ENCODE measurements at regions of chr4 and their contacts with region 1.

Region 1: DNA sequence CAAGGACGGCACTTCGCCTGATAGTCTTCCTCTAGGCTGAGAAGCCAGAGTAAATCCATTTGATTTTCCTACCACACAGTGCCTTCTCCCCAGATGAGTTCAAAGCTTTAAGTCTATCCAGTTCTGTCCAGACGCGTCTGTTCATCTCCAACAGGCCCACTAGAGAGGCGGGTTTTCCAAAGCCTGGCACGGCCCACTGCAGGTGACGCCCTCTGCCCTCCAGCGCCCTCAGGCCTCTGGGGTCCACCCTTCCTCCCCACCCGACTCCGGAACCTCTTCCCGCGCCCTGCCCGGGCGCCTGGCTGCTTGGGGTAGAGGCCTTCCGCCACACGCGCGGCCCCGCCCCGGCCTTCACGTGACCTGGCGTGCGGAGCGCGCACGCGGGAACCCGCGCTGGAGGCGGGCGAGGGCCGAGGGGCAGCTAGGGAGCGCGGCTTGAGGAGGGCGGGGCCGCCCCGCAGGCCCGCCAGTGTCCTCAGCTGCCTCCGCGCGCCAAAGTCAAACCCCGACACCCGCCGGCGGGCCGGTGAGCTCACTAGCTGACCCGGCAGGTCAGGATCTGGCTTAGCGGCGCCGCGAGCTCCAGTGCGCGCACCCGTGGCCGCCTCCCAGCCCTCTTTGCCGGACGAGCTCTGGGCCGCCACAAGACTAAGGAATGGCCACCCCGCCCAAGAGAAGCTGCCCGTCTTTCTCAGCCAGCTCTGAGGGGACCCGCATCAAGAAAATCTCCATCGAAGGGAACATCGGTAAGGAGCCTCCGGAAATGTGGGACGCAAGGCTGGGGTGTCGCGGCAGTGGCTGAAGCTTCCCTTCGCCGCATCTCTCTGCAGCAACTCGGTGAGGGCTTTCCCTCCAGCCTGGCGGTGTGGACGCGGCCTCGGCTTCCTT is at the start of gene DCK:
- DNase-seq: peak; percentile 94
- ATAC-seq: peak; percentile 82
- H3K4me3 Mint-ChIP-seq: peak within 1 kb of the TSS; percentile 99
- H3K27ac Mint-ChIP-seq: peak within 1 kb of the TSS; percentile 92
- H3K4me1 Mint-ChIP-seq: peaks cover 31% of the 10 kb centered on the region
- H3K27me3 Mint-ChIP-seq: no peaks in the 10 kb centered on the region
- total RNA-seq, gene DCK: 67.4 to 71.6 TPM

Region 2: DNA sequence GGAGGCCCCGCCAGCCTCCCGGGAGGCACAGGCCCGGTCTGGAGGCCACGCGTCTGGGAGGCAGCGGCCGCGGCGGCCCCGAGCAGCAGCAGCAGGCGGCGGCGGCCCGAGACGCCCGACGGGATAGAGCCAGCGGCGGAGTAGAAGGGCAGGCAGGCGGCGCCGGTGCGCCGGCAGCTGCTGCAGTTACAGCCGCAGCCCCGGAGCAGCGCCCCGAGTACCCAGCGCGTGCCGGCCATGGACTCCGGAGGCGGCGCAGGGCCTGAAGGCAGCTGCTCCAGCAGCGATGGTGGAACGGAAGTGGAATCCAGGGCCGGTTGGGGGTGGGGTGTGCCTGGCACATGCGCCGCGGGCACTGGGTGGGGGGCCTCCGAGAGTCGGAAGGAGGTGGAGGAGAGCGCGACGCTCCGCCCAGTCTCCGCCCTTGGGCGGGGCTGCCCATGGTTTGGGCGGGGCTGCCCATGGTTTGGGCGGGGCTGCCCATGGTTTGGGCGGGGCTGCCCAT is 153.8 kb before region 1 on chr4 and contains the start of gene GRSF1:
- POLR2A ChIA-PET with region 1: interaction called, 20 read pairs
- DNase-seq: peak; percentile 95
- ATAC-seq: peak; percentile 90
- H3K4me3 Mint-ChIP-seq: peak within 1 kb of the TSS; percentile 97
- H3K27ac Mint-ChIP-seq: peak within 1 kb of the TSS; percentile 94
- H3K4me1 Mint-ChIP-seq: peaks cover 22% of the 10 kb centered on the region
- H3K27me3 Mint-ChIP-seq: no peaks in the 10 kb centered on the region
- total RNA-seq, gene GRSF1: 58.6 to 61.0 TPM

Region 3: DNA sequence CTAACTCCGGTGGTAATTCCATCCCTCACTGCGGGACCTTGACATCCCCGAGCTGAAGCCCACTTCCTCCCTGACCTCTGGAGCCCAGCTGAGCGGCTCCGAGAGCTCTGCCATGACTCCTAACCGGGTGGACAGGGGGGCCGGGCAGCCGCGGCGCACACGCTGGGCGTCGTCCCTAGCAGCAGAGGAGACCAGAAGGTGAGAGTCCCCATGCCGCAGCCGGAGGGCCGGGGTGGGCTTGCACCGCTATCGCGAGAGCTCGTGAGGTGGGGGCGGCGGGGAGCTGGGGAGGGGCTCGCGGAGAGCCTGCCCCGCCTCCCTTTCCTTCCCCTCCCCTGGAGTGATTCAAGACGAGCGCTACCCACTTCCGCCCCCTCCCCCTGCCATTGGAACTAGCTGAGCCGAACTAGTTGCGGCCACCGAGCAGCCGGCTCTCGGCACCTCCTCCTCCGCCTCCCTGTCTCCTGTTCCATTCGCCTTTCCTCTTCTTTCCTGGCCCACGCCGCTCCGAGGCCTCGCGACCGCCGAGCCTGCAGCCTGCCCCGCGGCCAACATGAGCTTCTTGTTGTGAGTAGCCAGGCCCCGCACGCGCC is 91.3 kb before region 1 on chr4 and contains the start of gene MOB1B:
- POLR2A ChIA-PET with region 1: interaction called, 13 read pairs
- DNase-seq: peak; percentile 83
- ATAC-seq: peak; percentile 96
- H3K4me3 Mint-ChIP-seq: peak within 1 kb of the TSS; percentile 100
- H3K27ac Mint-ChIP-seq: peak within 1 kb of the TSS; percentile 95
- H3K4me1 Mint-ChIP-seq: peaks cover 19% of the 10 kb centered on the region
- H3K27me3 Mint-ChIP-seq: no peaks in the 10 kb centered on the region
- total RNA-seq, gene MOB1B: 13.3 to 14.0 TPM

Region 4: DNA sequence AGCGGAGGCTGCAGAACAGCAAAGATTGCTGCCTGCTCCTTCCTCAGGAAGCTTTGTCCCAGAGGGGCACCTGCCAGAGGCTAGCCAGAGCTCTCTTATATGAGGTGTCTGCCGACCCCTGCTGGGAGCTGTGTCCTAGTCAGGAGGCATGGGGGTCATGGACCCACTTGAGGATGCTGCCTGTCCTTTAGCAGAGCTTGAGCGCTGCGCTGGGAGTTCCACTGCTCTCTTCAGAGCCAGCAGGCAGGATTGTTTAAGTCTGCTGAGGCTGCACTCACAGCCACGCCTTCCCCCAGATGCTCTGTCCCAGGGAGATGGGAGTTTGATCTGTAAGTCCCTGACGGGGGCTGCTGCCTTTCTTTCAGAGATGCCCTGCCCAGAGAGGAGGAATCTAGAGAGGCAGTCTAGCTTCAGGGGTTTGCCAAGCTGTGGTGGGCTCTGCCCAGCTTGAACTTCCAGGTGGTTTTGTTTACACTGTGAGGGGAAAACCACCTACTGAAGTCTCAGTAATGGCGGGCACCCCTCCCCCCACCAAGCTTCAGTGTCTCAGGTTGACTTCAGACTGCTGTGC is 10.9 kb after region 1 on chr4:
- POLR2A ChIA-PET with region 1: interaction called, 48 read pairs
- DNase-seq: peak; percentile 70
- ATAC-seq: peak; percentile 54
- H3K4me3 Mint-ChIP-seq: peak overlapping the region; percentile 69
- H3K27ac Mint-ChIP-seq: peak overlapping the region; percentile 76
- H3K4me1 Mint-ChIP-seq: peaks cover 77% of the 10 kb centered on the region
- H3K27me3 Mint-ChIP-seq: no peaks in the 10 kb centered on the region

Region 5: GRCh38 chr4:71009890-71010588 is 16.6 kb after region 1 on chr4:
- POLR2A ChIA-PET with region 1: interaction called, 48 read pairs
- DNase-seq: no peak
- ATAC-seq: peak; percentile 51
- H3K4me3 Mint-ChIP-seq: peak overlapping the region; percentile 11
- H3K27ac Mint-ChIP-seq: peak overlapping the region; percentile 40
- H3K4me1 Mint-ChIP-seq: peaks cover 40% of the 10 kb centered on the region
- H3K27me3 Mint-ChIP-seq: no peaks in the 10 kb centered on the region